Sigmoid colon (tissue), 7 donors: ENCODE measurements at regions of chr6 and their contacts with region 1.

Region 1: DNA sequence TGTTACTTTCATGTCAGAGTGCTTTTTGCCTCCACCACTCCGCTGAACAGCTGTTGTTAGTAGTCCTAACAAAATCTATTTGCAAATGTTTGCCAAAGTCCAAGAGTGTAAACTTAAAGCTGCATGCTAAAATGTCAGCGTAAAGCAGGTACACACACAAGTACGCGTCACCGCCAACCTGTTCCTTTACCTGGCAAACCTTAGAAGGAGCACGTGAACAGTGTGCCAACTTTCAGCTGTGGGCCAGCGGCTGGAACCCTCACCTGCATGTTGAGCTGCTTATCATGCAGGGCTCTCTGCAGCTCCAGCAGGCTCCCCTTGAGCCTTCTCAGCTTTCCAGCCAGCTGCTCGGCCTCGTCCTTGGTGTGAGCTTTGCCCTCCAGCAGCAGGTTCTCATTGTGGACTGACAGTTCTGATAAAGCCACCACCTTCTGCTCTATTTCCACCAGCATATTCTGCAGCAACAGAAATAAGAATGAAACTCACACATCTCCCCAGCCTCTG is 359.3 kb downstream of the SYNE1 start:
- DNase-seq: no peak
- H3K4me3 ChIP-seq: no peak overlapping the region
- H3K27ac ChIP-seq: peak overlapping the region in 1 of 4 donors; percentile 17
- H3K4me1 ChIP-seq: peaks cover 0 to 17% (median 13%) of the 10 kb centered on the region in 4 donors
- H3K27me3 ChIP-seq: no peaks in the 10 kb centered on the region
- CTCF ChIP-seq: no peak
- EP300 ChIP-seq: no peak
- POLR2A ChIP-seq: no peak

Region 2: GRCh38 chr6:152225241-152225934 is 52.5 kb before region 1 on chr6:
- intact Hi-C with region 1: loop called (anchors 5 kb)
- DNase-seq: no peak
- H3K4me3 ChIP-seq: no peak overlapping the region
- H3K27ac ChIP-seq: peak overlapping the region in 3 of 4 donors; percentile 36 to 67 (median 38)
- H3K4me1 ChIP-seq: peaks cover 0 to 9% (median 3%) of the 10 kb centered on the region in 4 donors
- H3K27me3 ChIP-seq: no peaks in the 10 kb centered on the region
- CTCF ChIP-seq: no peak
- EP300 ChIP-seq: no peak
- POLR2A ChIP-seq: no peak